ENCODE measurements at regions of chr5 and their contacts with region 1.

Region 1: GRCh38 chr5:128844354-128844923 is 120.8 kb upstream of the SLC27A6 start:
- DNase-seq: no peak
- H3K4me3 ChIP-seq: no peak overlapping the region
- H3K27ac ChIP-seq: no peak overlapping the region
- H3K27me3 ChIP-seq: no peaks in the 10 kb centered on the region
- CTCF ChIP-seq: no peak

Region 2: DNA sequence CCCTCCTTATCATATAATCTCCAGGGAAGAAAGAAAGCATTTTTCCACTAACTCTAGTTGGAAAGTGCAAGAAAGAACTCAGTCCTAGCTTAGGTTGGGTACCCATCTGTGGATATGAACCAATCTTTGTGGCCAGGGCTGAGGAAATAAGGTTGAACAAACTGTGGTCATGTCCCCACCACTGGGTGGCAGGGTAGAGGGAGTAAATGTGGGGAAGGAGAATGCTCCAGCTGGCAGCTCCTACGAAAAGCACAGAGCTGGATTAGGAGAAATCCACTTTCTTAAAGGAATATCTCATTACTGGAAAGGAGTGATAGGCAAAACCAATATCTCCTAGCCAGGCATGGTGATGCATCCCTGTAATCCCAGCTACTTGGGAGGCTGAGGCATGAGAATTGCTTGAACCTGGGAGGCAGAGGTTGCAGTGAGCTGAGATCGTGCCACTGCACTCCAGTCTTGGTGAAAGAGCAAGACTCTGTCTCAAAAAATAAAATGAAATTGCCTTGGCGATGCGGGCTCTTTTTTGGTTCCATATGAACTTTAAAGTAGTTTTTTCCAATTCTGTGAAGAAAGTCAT is 966.2 kb before region 1 on chr5:
- in situ Hi-C with region 1: no loop called
- DNase-seq: peak; percentile 53
- H3K4me3 ChIP-seq: no peak overlapping the region
- H3K27ac ChIP-seq: no peak overlapping the region
- H3K27me3 ChIP-seq: no peaks in the 10 kb centered on the region
- CTCF ChIP-seq: peak; percentile 80

Region 3: DNA sequence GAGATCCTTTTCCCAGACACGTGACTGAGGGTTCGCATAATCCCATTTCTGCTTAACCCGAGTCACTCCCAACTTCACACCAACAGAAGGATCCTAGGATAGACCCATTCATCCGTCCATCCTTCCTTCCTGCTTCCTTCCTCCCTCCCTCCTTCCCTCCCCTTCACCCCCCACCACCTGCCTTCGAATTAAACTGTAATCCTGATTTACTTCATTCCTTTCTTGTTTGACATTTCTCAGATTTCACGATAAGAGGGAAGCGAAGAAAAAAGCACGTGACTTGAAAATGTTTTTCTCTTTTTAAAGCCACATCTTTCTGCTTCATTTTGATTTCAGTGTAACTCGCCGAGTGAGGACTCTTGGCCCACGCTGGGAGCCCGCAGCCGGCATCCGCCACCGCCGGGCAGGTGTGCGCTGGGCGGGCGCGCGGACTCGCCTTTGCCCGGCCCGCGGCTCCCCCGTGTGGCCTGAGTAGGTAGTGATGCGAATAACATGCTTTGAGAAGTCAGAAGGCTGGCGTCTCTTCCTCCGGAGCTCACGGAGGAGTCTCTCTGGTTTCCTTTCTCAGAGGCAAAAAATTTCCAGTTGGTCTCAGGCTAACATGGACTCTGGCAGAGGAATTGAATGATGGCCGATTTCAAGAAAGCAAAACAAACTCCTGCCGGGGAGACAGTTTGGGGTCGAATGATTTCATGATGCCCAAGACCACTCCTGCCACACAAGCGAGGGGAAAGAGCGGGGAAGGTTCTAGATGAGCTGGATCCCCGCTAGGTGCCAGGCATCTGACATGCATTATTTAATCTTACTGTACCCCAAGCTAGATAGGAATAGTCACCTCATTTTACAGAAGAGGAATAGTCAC is 643.1 kb before region 1 on chr5:
- in situ Hi-C with region 1: loop called (anchors 25 kb)
- DNase-seq: peak; percentile 59
- H3K4me3 ChIP-seq: no peak overlapping the region
- H3K27ac ChIP-seq: no peak overlapping the region
- H3K27me3 ChIP-seq: no peaks in the 10 kb centered on the region
- CTCF ChIP-seq: peak; percentile 75

Region 4: DNA sequence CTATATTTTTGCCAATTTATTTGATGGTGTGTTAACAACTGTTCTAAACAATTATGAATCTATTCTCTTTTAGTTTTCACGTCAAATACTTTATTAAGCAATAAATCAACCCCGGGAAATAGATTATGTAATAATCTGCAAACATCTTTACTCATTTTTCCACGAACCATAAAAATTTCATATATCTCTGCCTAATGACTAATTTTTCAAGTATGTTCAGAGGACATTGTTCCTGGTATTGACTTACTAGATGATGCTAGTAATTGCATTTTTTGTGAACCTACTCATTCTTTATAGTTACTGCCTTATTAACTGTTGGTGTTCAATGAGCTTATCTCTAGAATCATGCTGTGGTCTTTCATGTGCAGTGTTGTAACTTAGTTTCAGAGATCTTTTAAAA is 265.4 kb before region 1 on chr5:
- in situ Hi-C with region 1: no loop called
- DNase-seq: no peak
- H3K4me3 ChIP-seq: no peak overlapping the region
- H3K27ac ChIP-seq: peak overlapping the region; percentile 58
- H3K27me3 ChIP-seq: no peaks in the 10 kb centered on the region
- CTCF ChIP-seq: no peak

Region 5: DNA sequence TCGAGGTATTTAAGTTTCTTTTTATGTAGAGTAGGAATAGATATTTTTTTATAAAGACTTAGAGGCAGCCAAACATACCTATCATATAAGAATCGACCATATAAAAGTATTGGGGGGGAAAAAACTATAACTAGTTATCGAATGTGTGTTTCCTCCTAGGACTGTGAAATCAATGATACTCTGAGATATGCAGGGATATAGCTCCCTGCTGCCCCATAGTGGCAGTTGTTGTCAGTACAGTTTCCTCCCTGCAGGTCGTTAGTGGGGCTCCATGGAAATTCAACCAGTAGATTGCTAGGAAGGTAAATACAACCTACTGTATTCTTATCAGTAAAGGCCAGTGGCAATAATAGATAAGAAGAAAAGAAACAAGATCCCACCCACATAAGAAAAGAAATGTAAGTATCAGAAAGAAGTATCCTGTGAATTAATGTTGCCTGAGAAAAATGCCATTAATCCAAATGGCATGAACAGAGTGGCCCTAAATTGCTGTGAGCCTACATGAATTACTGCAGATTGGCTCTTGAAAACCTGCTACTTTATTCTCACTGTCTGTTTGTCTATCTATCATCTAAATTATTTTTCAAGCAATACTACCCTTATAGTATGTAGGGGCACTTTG is 169.5 kb before region 1 on chr5:
- in situ Hi-C with region 1: loop called (anchors 25 kb)
- DNase-seq: peak; percentile 63
- H3K4me3 ChIP-seq: no peak overlapping the region
- H3K27ac ChIP-seq: no peak overlapping the region
- H3K27me3 ChIP-seq: no peaks in the 10 kb centered on the region
- CTCF ChIP-seq: peak; percentile 90

Region 6: GRCh38 chr5:128974567-128974966 is 130.1 kb after region 1 on chr5:
- in situ Hi-C with region 1: no loop called
- DNase-seq: no peak
- H3K4me3 ChIP-seq: no peak overlapping the region
- H3K27ac ChIP-seq: no peak overlapping the region
- H3K27me3 ChIP-seq: no peaks in the 10 kb centered on the region
- CTCF ChIP-seq: no peak